ENCODE measurements at regions of chr12 and their contacts with region 1.

Region 1: DNA sequence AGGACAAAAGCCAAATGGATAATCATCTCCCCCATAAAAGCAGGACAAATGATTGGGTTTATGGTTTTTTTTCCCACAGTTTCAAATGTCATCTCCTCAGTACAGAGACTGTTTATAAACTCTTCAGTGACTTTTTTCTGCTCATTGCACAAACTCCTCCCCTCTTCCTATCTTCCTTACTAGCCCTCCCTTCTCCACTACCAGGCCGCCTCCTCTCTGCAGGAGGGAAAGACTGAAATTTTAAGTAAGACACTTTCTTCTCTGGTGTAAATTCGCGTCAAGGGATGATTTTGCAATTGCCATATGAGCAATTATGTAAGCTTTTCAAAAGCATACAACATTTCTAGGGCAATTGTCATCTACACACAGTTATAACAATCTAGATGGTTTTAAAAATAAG is 37.0 kb downstream of the BTG1 start:
- DNase-seq: no peak
- ATAC-seq: peak in 1 of 4 experiments; percentile 19
- H3K4me3 ChIP-seq: no peak overlapping the region
- H3K4me3 Mint-ChIP-seq: peak overlapping the region in 1 of 3 donors; percentile 68
- H3K27ac ChIP-seq: no peak overlapping the region
- H3K27ac Mint-ChIP-seq: peak overlapping the region; percentile 90 to 92
- H3K4me1 ChIP-seq: peaks cover 13 to 24% of the 10 kb centered on the region in 2 experiments
- H3K4me1 Mint-ChIP-seq: peaks cover 80 to 86% (median 82%) of the 10 kb centered on the region in 3 donors
- H3K27me3 ChIP-seq: no peaks in the 10 kb centered on the region
- H3K27me3 Mint-ChIP-seq: no peaks in the 10 kb centered on the region

Region 2: DNA sequence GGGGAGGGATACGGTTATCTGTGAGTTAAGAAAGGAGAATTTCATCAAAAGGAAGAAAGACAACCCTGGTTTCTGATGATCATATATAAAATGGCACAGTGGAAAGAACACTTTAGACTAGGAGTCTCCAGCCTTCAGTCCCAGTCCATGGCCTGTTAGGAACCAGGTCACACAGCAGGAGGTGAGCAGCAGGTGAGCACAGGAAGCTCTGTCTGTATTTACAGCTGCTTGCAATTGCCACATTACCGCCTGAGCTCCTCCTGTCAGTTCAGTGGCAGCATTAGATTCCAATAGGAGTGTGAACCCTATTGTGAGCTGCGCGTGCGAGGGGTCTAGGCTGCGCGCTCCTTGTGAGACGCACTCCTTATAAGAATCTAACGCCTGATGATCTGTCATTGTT is 100.9 kb before region 1 on chr12:
- CTCF ChIA-PET with region 1: no interaction called
- POLR2A ChIA-PET with region 1: no interaction called
- DNase-seq: no peak
- ATAC-seq: no peak
- H3K4me3 ChIP-seq: no peak overlapping the region
- H3K4me3 Mint-ChIP-seq: no peak overlapping the region
- H3K27ac ChIP-seq: no peak overlapping the region
- H3K27ac Mint-ChIP-seq: peak overlapping the region in 1 of 2 donors; percentile 62
- H3K4me1 ChIP-seq: peaks cover 11 to 20% of the 10 kb centered on the region in 2 experiments
- H3K4me1 Mint-ChIP-seq: peaks cover 77 to 78% (median 77%) of the 10 kb centered on the region in 3 donors
- H3K27me3 ChIP-seq: no peaks in the 10 kb centered on the region
- H3K27me3 Mint-ChIP-seq: no peaks in the 10 kb centered on the region

Region 3: DNA sequence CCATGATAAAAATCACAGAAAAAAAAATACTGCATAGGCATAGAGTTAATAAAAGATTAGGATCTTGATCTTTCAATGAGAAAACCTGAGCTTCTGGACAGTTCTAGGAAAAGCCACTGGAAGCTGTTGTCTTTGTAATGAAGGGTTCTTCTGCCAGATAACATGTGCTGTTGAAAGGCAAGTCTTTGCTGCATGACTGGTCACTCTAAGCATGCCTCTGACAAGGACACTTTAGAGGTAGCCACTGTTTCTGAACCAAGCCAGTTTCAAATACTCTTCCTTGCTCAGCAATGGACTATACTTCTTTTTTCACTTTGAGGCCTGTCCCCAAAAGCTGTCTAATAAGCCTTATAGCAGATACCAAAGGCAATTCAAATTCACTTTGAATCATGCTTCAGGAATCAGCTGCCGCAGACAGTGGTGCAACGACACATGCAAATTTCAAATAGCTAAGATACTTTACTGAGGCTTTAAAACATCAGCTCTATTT is 33.2 kb before region 1 on chr12:
- CTCF ChIA-PET with region 1: interaction called in 1 of 2 experiments, 11 read pairs
- POLR2A ChIA-PET with region 1: interaction called in 1 of 2 experiments, 13 read pairs
- DNase-seq: no peak
- ATAC-seq: no peak
- H3K4me3 ChIP-seq: no peak overlapping the region
- H3K4me3 Mint-ChIP-seq: no peak overlapping the region
- H3K27ac ChIP-seq: no peak overlapping the region
- H3K27ac Mint-ChIP-seq: peak overlapping the region; percentile 51 to 64
- H3K4me1 ChIP-seq: peaks cover 3 to 5% of the 10 kb centered on the region in 2 experiments
- H3K4me1 Mint-ChIP-seq: peaks cover 52 to 56% (median 53%) of the 10 kb centered on the region in 3 donors
- H3K27me3 ChIP-seq: no peaks in the 10 kb centered on the region
- H3K27me3 Mint-ChIP-seq: no peaks in the 10 kb centered on the region

Region 4: DNA sequence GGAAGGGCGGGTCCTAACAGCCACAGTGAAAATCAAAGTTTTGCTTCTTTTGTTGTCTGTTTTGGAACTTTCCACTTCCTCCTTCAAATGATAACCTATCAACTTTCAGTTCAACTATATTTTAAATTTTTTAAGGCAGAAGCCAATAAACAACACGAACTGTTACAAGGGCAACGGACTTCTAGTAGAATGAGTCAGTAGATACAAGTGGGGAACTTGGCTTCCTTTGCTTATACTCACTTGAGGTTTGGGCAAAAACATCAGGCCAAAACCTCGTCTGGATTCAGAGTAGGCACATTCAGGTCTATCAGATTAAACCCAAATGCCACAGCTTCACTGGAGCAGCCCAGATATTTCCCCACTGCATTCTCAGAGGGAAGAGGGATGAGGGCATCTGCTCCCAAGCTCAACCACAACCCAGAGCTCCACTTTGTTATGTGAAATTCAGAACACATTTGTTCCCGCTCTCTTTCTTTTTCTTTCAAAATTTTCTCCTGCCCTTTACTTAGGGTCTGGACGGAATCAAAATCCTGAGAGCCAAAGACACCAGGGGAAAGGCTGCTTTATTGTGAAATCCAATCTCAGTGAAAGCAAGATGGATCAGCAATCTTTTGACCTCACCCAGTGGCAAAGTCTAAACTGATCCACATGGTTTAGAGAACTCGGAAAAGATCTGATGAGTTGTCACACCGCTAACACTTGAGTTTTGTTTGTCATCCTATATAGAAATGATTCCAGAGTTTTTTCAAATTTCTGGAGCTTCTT is 189.5 kb after region 1 on chr12:
- CTCF ChIA-PET with region 1: no interaction called
- POLR2A ChIA-PET with region 1: interaction called in 1 of 2 experiments, 12 read pairs
- DNase-seq: peak in 9 of 35 experiments; percentile 0 to 39 (median 9)
- ATAC-seq: peak; percentile 93 to 95 (median 94)
- H3K4me3 ChIP-seq: no peak overlapping the region
- H3K4me3 Mint-ChIP-seq: peak overlapping the region in 2 of 3 donors; percentile 11 to 47
- H3K27ac ChIP-seq: peak overlapping the region; percentile 70
- H3K27ac Mint-ChIP-seq: no peak overlapping the region
- H3K4me1 ChIP-seq: peaks cover 17 to 25% of the 10 kb centered on the region in 2 experiments
- H3K4me1 Mint-ChIP-seq: peaks cover 0 to 20% (median 16%) of the 10 kb centered on the region in 3 donors
- H3K27me3 ChIP-seq: no peaks in the 10 kb centered on the region
- H3K27me3 Mint-ChIP-seq: no peaks in the 10 kb centered on the region